MCF 10A (cell line): ENCODE measurements at regions of chr2 and their contacts with region 1.

Region 1: DNA sequence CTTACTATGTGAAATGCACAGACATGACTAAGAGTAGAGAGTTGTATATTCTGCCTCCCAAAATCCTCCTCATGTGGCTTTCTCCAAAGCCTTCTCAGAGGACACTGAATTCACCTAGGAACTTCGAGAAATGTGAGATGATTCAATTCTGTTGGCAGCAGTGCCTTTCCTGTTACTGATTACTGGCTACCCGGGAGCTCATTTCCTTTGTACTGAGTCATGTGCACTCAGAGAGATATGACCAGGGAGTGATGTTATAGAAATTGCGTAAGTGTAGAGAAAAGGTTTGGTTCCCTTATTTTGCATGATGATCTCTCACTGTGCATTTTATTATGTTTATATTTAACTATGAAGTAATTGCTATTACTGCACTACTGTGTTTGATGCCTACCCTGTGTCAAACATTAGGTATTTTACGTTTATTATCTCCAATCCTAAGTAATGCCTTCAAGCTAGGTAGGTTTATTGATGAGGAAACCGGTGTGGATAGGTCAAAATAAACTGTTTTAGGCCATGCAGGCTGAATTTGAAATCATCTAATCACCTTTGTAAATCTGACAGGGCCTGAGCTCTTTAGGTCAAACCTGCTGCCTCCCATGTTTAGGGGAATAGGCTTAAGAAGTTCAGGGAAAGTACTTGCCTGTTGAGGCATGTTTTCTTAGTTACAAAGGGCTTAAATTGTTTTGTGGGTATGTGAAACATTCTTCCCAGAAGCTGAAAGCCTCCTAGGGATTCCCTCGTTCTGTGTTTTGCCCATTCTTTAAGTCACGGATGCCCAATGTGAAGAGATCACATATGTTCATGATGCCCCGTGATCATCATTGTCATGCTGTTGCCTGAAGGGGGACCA is 86.8 kb downstream of the FMNL2 start:
- DNase-seq: peak; percentile 98
- H3K4me3 Mint-ChIP-seq: peak overlapping the region; percentile 30
- H3K27ac Mint-ChIP-seq: peak overlapping the region; percentile 69
- H3K4me1 Mint-ChIP-seq: peaks cover 27% of the 10 kb centered on the region
- H3K27me3 Mint-ChIP-seq: no peaks in the 10 kb centered on the region
- CTCF ChIP-seq: no peak

Region 2: GRCh38 chr2:152189622-152190495 is 231.9 kb before region 1 on chr2:
- CTCF ChIA-PET with region 1: no interaction called
- POLR2A ChIA-PET with region 1: no interaction called
- intact Hi-C with region 1: loop called (anchors 2 kb)
- DNase-seq: peak; percentile 85
- H3K4me3 Mint-ChIP-seq: no peak overlapping the region
- H3K27ac Mint-ChIP-seq: no peak overlapping the region
- H3K4me1 Mint-ChIP-seq: no peaks in the 10 kb centered on the region
- H3K27me3 Mint-ChIP-seq: no peaks in the 10 kb centered on the region
- CTCF ChIP-seq: peak; percentile 84

Region 3: DNA sequence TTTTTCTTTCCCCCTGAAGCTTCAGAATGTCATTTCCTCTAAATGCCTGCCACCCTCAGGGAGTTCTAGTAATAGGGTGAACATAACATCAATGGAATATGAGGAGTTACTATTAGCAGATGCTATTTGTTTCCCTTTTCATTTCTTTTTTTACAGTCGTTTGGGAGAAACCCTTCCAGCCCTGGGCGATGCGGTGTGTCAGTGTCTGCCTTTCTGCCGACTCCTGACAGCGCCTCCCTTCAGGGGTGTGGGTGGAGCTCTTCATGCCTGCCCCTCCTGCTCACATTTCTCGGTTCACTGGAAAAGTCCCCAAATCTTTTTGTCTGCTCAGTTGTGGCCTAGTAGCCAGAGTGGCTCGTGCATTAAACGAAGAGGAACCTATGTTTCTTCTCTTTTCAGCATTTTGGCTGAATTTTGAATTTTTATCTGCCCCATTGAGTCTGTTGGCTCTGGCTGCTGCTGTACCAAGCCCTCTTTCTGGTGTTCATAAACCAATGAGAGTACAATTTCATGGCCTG is 14.5 kb before region 1 on chr2:
- CTCF ChIA-PET with region 1: interaction called, 6 read pairs
- POLR2A ChIA-PET with region 1: interaction called, 21 read pairs
- intact Hi-C with region 1: no loop called
- DNase-seq: peak; percentile 71
- H3K4me3 Mint-ChIP-seq: peak overlapping the region; percentile 71
- H3K27ac Mint-ChIP-seq: peak overlapping the region; percentile 55
- H3K4me1 Mint-ChIP-seq: peaks cover 77% of the 10 kb centered on the region
- H3K27me3 Mint-ChIP-seq: no peaks in the 10 kb centered on the region
- CTCF ChIP-seq: no peak

Region 4: GRCh38 chr2:152432206-152432653 is 10.5 kb after region 1 on chr2:
- CTCF ChIA-PET with region 1: interaction called, 5 read pairs
- POLR2A ChIA-PET with region 1: interaction called, 38 read pairs
- intact Hi-C with region 1: no loop called
- DNase-seq: peak; percentile 96
- H3K4me3 Mint-ChIP-seq: peak overlapping the region; percentile 8
- H3K27ac Mint-ChIP-seq: peak overlapping the region; percentile 83
- H3K4me1 Mint-ChIP-seq: peaks cover 39% of the 10 kb centered on the region
- H3K27me3 Mint-ChIP-seq: no peaks in the 10 kb centered on the region
- CTCF ChIP-seq: no peak

Region 5: GRCh38 chr2:152437276-152438108 is 15.7 kb after region 1 on chr2:
- CTCF ChIA-PET with region 1: interaction called, 5 read pairs
- POLR2A ChIA-PET with region 1: interaction called, 38 read pairs
- intact Hi-C with region 1: no loop called
- DNase-seq: no peak
- H3K4me3 Mint-ChIP-seq: no peak overlapping the region
- H3K27ac Mint-ChIP-seq: peak overlapping the region; percentile 27
- H3K4me1 Mint-ChIP-seq: peaks cover 47% of the 10 kb centered on the region
- H3K27me3 Mint-ChIP-seq: no peaks in the 10 kb centered on the region
- CTCF ChIP-seq: no peak

Region 6: DNA sequence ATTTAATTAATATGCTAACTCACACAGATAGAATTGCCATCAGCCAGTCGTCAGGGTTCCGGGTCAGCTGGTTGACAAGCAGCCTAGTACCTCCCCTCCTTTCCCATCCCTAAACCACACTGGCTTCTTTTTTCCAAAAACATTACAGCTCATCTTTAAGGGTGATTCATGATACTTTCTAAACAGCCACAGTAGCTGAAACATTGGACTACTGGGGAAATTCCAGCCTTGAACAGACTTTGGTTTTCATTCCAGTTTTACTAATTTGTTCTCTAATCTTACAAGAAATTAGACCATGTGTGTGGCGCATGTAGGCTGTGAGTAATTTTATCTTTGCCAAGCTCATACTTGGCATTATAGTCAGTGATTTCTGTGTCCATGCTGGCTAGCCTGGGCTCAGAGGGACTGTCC is 24.1 kb after region 1 on chr2:
- CTCF ChIA-PET with region 1: interaction called, 3 read pairs
- POLR2A ChIA-PET with region 1: interaction called, 16 read pairs
- intact Hi-C with region 1: no loop called
- DNase-seq: peak; percentile 84
- H3K4me3 Mint-ChIP-seq: peak overlapping the region; percentile 29
- H3K27ac Mint-ChIP-seq: peak overlapping the region; percentile 12
- H3K4me1 Mint-ChIP-seq: peaks cover 47% of the 10 kb centered on the region
- H3K27me3 Mint-ChIP-seq: no peaks in the 10 kb centered on the region
- CTCF ChIP-seq: no peak

Region 7: GRCh38 chr2:152497481-152498052 is 75.8 kb after region 1 on chr2:
- CTCF ChIA-PET with region 1: interaction called, 3 read pairs
- POLR2A ChIA-PET with region 1: interaction called, 11 read pairs
- intact Hi-C with region 1: no loop called
- DNase-seq: peak; percentile 68
- H3K4me3 Mint-ChIP-seq: peak overlapping the region; percentile 52
- H3K27ac Mint-ChIP-seq: peak overlapping the region; percentile 52
- H3K4me1 Mint-ChIP-seq: peaks cover 53% of the 10 kb centered on the region
- H3K27me3 Mint-ChIP-seq: no peaks in the 10 kb centered on the region
- CTCF ChIP-seq: no peak